ENCODE measurements at regions of chr17 and their contacts with region 1.

Region 1: GRCh38 chr17:17206124-17206912 is at the start of gene PLD6:
- DNase-seq: peak; percentile 94
- H3K4me3 ChIP-seq: peak within 1 kb of the TSS; percentile 47 to 68 (median 54)
- H3K27ac ChIP-seq: peak within 1 kb of the TSS; percentile 86 to 98 (median 94)
- H3K4me1 ChIP-seq: peaks cover 0 to 60% (median 59%) of the 10 kb centered on the region in 4 donors
- H3K27me3 ChIP-seq: no peaks in the 10 kb centered on the region
- CTCF ChIP-seq: no peak
- EP300 ChIP-seq: peak in 1 of 4 donors; percentile 17
- POLR2A ChIP-seq: peak in 1 of 2 donors; percentile 28
- total RNA-seq, gene PLD6: 7.7 to 15.3 (median 10.2) TPM

Region 2: DNA sequence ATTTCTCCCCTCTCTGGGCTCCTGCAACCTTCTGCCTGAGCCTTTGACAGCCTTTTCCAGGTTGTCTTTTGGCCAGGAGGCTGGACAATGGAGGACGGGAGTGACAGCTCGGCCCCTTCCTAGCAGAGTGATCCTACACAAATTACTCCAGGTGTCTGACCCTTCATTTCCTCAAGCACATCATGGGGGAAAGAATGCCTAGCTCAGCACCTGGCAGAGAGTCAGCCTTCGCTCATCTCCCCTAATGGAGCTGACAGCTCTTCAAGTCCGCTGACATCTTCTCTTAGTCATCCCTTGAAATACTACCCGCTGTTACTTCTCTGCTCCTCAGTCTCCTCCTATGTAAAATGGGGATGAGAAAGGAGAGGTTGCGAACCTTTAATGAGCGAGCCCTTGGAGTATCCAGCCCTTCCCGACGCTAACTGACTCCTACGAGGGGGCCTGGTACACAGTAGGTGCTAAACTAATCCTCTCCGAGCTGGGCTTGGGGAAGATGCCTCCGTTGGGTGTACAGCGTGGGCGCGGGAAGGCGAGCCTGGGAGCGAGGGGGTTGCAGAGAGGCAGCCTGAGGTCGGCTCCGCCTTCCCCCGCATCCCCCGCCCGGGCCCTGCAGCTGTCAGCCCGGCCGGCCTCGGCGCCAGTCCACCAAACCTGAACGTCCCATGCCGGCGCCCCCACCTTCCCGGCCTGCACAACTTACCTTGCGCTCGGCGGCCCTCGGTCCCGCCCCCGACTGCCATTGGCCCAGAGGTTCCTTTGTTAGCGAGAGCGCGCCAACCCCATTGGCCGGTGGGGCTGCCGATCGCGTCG is 164.5 kb before region 1 on chr17:
- intact Hi-C with region 1: loop called (anchors 2 kb)
- DNase-seq: peak; percentile 99
- H3K4me3 ChIP-seq: peak overlapping the region; percentile 30 to 79 (median 76)
- H3K27ac ChIP-seq: peak overlapping the region; percentile 74 to 83 (median 76)
- H3K4me1 ChIP-seq: peaks cover 0 to 48% (median 44%) of the 10 kb centered on the region in 4 donors
- H3K27me3 ChIP-seq: no peaks in the 10 kb centered on the region
- CTCF ChIP-seq: no peak
- EP300 ChIP-seq: no peak
- POLR2A ChIP-seq: no peak

Region 3: DNA sequence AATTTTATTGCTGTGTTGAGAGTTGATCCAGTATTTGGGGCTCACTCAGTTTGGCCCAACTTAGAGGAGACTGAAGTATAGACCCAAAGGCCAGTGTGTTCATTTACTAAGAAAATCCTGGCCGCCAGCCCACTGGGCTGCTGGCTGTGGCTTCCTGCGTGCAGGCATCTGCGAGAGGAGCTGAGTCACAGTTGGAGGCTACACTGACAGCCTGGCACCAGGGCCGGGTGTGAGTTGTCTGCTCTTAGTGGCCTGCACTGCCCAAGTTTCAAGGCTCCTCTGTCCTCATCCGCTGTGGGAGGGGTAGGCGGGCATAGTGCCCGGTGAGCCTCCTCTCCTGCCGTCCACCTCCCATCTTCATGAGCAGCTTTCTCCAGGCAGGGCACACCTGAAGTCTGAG is 54.4 kb before region 1 on chr17:
- intact Hi-C with region 1: loop called (anchors 5 kb)
- DNase-seq: peak; percentile 96
- H3K4me3 ChIP-seq: no peak overlapping the region
- H3K27ac ChIP-seq: peak overlapping the region; percentile 73 to 84 (median 77)
- H3K4me1 ChIP-seq: peaks cover 0 to 36% (median 24%) of the 10 kb centered on the region in 4 donors
- H3K27me3 ChIP-seq: no peaks in the 10 kb centered on the region
- CTCF ChIP-seq: no peak
- EP300 ChIP-seq: no peak
- POLR2A ChIP-seq: no peak

Region 4: GRCh38 chr17:17280613-17281549 is 74.6 kb after region 1 on chr17 and contains the start of gene COPS3:
- intact Hi-C with region 1: loop called (anchors 5 kb)
- DNase-seq: peak; percentile 99
- H3K4me3 ChIP-seq: peak within 1 kb of the TSS; percentile 79 to 96 (median 95)
- H3K27ac ChIP-seq: peak within 1 kb of the TSS; percentile 96 to 99 (median 98)
- H3K4me1 ChIP-seq: peaks cover 0 to 44% (median 40%) of the 10 kb centered on the region in 4 donors
- H3K27me3 ChIP-seq: no peaks in the 10 kb centered on the region
- CTCF ChIP-seq: no peak
- EP300 ChIP-seq: no peak
- POLR2A ChIP-seq: peak; percentile 61 to 63
- total RNA-seq, gene COPS3: 56.8 to 105 (median 72.7) TPM

Region 5: GRCh38 chr17:17435323-17435722 is 229.0 kb after region 1 on chr17:
- intact Hi-C with region 1: no loop called
- DNase-seq: no peak
- H3K4me3 ChIP-seq: no peak overlapping the region
- H3K27ac ChIP-seq: no peak overlapping the region
- H3K4me1 ChIP-seq: no peaks in the 10 kb centered on the region
- H3K27me3 ChIP-seq: no peaks in the 10 kb centered on the region
- CTCF ChIP-seq: no peak
- EP300 ChIP-seq: no peak
- POLR2A ChIP-seq: no peak